ENCODE measurements at regions of chr2 and their contacts with region 1.

Region 1: GRCh38 chr2:28821295-28821958 is 10.8 kb downstream of the SPDYA start:
- DNase-seq: peak; percentile 24 to 86
- ATAC-seq: peak; percentile 86 to 98 (median 94)
- H3K4me3 ChIP-seq: no peak overlapping the region
- H3K4me3 Mint-ChIP-seq: no peak overlapping the region
- H3K27ac ChIP-seq: no peak overlapping the region
- H3K27ac Mint-ChIP-seq: no peak overlapping the region
- H3K4me1 ChIP-seq: no peaks in the 10 kb centered on the region
- H3K4me1 Mint-ChIP-seq: no peaks in the 10 kb centered on the region
- H3K27me3 ChIP-seq: no peaks in the 10 kb centered on the region
- H3K27me3 Mint-ChIP-seq: no peaks in the 10 kb centered on the region
- CTCF ChIP-seq: peak; percentile 78

Region 2: GRCh38 chr2:28894470-28895177 is 73.2 kb after region 1 on chr2 and contains the start of gene WDR43:
- intact Hi-C with region 1: loop called (anchors 2 kb)
- DNase-seq: peak; percentile 98 to 99
- ATAC-seq: peak; percentile 95 to 100 (median 96)
- H3K4me3 ChIP-seq: peak within 1 kb of the TSS; percentile 96
- H3K4me3 Mint-ChIP-seq: peak within 1 kb of the TSS; percentile 91
- H3K27ac ChIP-seq: peak within 1 kb of the TSS; percentile 76
- H3K27ac Mint-ChIP-seq: peak within 1 kb of the TSS; percentile 77 to 93
- H3K4me1 ChIP-seq: peaks cover 13% of the 10 kb centered on the region
- H3K4me1 Mint-ChIP-seq: peaks cover 29 to 32% of the 10 kb centered on the region in 2 donors
- H3K27me3 ChIP-seq: no peaks in the 10 kb centered on the region
- H3K27me3 Mint-ChIP-seq: no peaks in the 10 kb centered on the region
- CTCF ChIP-seq: no peak
- total RNA-seq, gene WDR43: 45.1 to 53.2 (median 49.1) TPM

Region 3: DNA sequence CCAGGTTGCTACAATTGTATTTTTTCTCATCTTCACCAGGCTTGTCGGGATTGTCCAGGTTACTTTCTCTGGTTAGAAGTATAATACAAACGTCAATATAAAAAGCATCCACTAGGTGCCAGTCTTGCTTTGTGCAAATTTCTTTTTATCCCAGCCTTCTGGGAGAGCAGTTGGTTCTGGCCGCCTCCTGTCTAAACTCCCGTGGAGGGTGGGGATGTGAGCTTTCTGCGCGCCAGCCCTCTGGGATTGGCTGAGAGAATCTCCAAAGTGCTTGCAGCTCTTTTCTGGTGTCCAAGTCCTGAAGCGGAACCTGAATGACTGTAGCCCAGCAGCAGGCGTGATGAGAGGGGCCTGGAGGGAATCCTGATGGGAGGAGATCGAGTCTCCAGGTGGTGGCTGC is 137.3 kb after region 1 on chr2:
- intact Hi-C with region 1: loop called (anchors 5 kb)
- DNase-seq: peak; percentile 25 to 78
- ATAC-seq: peak; percentile 63 to 94 (median 74)
- H3K4me3 ChIP-seq: no peak overlapping the region
- H3K4me3 Mint-ChIP-seq: no peak overlapping the region
- H3K27ac ChIP-seq: no peak overlapping the region
- H3K27ac Mint-ChIP-seq: peak overlapping the region in 1 of 2 donors; percentile 25
- H3K4me1 ChIP-seq: peaks cover 6% of the 10 kb centered on the region
- H3K4me1 Mint-ChIP-seq: peaks cover 6 to 12% of the 10 kb centered on the region in 2 donors
- H3K27me3 ChIP-seq: no peaks in the 10 kb centered on the region
- H3K27me3 Mint-ChIP-seq: peaks cover 0 to 3% of the 10 kb centered on the region in 2 donors
- CTCF ChIP-seq: peak; percentile 82

Region 4: DNA sequence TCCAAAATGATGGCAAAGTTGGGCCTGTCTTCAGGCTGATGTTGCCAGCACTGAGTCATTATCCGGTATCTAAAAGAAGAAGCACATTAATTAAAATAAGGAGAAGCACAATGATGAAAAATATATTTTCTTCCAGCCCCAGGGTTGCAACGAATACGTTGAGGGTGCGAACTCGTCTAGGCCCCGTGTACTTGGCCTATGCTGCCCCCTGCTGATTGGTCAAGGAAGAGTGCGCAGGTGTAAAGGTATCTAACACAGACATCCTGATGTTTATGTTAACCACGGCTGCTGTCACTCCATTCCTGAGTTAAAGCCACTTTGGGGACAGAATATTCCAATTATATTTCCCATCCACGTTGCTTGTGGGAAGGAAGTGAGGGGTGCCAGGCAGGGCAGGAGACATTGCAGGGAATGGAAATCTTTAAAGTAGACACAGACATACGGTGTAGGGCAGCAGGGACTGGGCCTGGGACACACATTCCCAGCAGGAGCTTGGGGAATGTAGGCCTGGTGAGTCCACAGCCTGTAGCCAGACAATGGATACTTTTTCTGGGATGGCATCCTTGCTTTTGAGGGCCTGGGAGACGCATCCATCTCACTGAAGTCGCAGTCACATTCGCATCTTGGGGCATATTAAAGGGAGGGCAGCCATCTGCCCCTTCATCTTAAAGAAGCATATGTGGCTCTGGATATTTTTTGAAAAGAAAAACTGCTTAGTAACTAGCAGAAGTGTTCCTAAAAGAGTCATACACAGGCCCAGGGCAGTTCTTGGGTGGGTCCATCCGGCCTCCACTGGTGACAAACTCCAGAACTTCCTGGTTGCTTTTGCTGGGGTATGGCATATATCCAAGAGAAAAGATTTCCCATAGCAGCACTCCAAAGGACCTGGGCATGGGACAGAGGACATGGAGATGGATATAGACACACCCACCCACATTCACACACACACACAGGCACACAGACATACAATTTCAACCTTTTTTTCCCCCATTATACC is 375.7 kb after region 1 on chr2:
- intact Hi-C with region 1: loop called (anchors 1 kb)
- DNase-seq: peak; percentile 65 to 87
- ATAC-seq: peak; percentile 84 to 97 (median 95)
- H3K4me3 ChIP-seq: no peak overlapping the region
- H3K4me3 Mint-ChIP-seq: no peak overlapping the region
- H3K27ac ChIP-seq: no peak overlapping the region
- H3K27ac Mint-ChIP-seq: no peak overlapping the region
- H3K4me1 ChIP-seq: no peaks in the 10 kb centered on the region
- H3K4me1 Mint-ChIP-seq: peaks cover 5 to 6% of the 10 kb centered on the region in 2 donors
- H3K27me3 ChIP-seq: no peaks in the 10 kb centered on the region
- H3K27me3 Mint-ChIP-seq: no peaks in the 10 kb centered on the region
- CTCF ChIP-seq: peak; percentile 85

Region 5: DNA sequence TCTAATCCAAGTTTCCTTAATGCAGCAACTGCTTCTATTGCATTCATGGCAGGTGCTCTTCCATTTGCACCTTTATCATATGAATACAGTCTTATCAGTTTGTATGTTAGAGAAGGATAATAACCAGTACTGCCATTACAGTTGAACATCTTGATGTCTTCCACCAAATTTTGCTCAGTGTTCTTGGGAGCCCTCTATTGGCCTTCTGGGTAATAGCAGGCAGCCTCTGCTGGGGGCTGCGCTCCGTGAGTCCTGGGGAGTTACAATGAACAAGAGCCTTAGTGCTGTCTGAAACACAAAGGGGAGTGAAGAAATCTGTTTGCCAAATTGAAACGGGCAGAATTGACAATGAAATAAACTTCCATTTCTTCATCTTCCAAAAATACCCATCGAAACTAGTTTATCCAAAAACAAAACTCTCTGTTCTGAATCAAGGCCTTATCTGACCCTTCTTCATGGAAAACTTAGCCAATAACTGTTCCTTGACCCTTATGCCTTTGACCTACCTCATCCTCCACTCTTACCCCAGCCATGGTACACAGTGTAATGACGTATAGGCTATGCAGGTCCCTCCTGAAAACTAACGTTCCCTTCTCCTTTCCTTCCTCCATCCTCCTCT is 1020.1 kb after region 1 on chr2:
- intact Hi-C with region 1: loop called (anchors 5 kb)
- DNase-seq: peak in 1 of 2 donors; percentile 41
- ATAC-seq: peak in 2 of 3 donors; percentile 31 to 78
- H3K4me3 ChIP-seq: no peak overlapping the region
- H3K4me3 Mint-ChIP-seq: no peak overlapping the region
- H3K27ac ChIP-seq: no peak overlapping the region
- H3K27ac Mint-ChIP-seq: no peak overlapping the region
- H3K4me1 ChIP-seq: no peaks in the 10 kb centered on the region
- H3K4me1 Mint-ChIP-seq: no peaks in the 10 kb centered on the region
- H3K27me3 ChIP-seq: no peaks in the 10 kb centered on the region
- H3K27me3 Mint-ChIP-seq: peaks cover 14 to 49% of the 10 kb centered on the region in 2 donors
- CTCF ChIP-seq: peak; percentile 71